Activated T-helper 2 cell treated with anti-CD3 and anti-CD28 coated beads, Interferon-gamma antibody, Interleukin-2, Interleukin-4, amounts not matched to agents 10 μg/mL and 5 μg/mL and 100 μg/mL, durations not matched to agents 14 hours and 24 hours and 36 hours (primary cell): ENCODE measurements at regions of chr3 and their contacts with region 1.

Region 1: GRCh38 chr3:50611464-50612233 is at the start of gene CISH:
- DNase-seq: peak; percentile 99
- H3K4me3 Mint-ChIP-seq: peak within 1 kb of the TSS; percentile 95
- H3K27ac Mint-ChIP-seq: peak within 1 kb of the TSS; percentile 100
- H3K4me1 Mint-ChIP-seq: peaks cover 29% of the 10 kb centered on the region
- H3K27me3 Mint-ChIP-seq: no peaks in the 10 kb centered on the region
- total RNA-seq, gene CISH: 351 and 355 TPM in 2 replicates

Region 2: GRCh38 chr3:50436114-50436674 is 175.5 kb before region 1 on chr3:
- intact Hi-C with region 1: loop called (anchors 2 kb)
- DNase-seq: peak; percentile 68
- H3K4me3 Mint-ChIP-seq: no peak overlapping the region
- H3K27ac Mint-ChIP-seq: no peak overlapping the region
- H3K4me1 Mint-ChIP-seq: no peaks in the 10 kb centered on the region
- H3K27me3 Mint-ChIP-seq: no peaks in the 10 kb centered on the region

Region 3: DNA sequence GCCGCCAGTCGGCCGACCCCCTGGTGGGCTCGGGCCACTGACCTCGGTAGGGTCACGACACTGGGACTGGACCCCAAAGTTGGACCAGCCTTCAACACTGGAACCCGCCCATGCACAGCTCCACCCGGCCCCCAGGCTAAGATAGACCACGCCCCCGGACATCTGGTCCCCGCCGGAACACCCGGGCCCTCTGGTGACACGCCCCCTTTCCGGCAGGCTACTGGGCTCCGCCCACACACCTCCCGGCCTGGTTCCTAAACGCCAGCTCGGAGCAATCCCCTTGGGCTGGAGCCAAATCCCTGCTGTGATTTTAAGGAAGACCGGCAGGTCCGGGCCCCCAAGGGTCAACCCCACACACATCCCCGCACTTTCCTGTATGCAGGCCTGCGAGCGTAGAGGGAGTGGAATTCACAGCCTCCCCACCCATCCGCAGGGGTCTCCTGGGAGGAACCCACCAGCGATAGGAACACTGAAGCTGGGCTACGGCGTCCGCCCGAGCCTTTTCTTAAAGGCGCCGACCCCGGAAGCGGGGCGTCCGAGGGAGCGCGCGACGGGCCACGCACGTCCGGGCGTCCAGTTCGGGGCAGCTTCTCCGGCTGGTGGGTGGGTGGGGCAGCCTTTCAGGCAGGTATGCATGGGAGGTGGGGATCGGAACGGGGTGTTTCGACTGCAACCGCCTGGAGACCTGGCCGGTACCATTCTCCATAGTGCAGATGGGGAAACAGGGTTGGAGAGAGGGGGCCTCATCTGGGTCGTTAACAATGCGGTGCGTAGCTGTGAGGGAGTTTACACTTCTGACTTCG is 42.5 kb before region 1 on chr3 and contains the start of gene HEMK1:
- intact Hi-C with region 1: loop called (anchors 1 kb)
- DNase-seq: peak; percentile 93
- H3K4me3 Mint-ChIP-seq: peak within 1 kb of the TSS; percentile 95
- H3K27ac Mint-ChIP-seq: peak within 1 kb of the TSS; percentile 96
- H3K4me1 Mint-ChIP-seq: peaks cover 66% of the 10 kb centered on the region
- H3K27me3 Mint-ChIP-seq: no peaks in the 10 kb centered on the region
- total RNA-seq, gene HEMK1: 61.7 and 68.7 TPM in 2 replicates

Region 4: GRCh38 chr3:50600841-50601591 is 10.6 kb before region 1 on chr3:
- intact Hi-C with region 1: loop called (anchors 1 kb)
- DNase-seq: peak; percentile 80
- H3K4me3 Mint-ChIP-seq: peak overlapping the region; percentile 74
- H3K27ac Mint-ChIP-seq: peak overlapping the region; percentile 100
- H3K4me1 Mint-ChIP-seq: peaks cover 81% of the 10 kb centered on the region
- H3K27me3 Mint-ChIP-seq: no peaks in the 10 kb centered on the region

Region 5: DNA sequence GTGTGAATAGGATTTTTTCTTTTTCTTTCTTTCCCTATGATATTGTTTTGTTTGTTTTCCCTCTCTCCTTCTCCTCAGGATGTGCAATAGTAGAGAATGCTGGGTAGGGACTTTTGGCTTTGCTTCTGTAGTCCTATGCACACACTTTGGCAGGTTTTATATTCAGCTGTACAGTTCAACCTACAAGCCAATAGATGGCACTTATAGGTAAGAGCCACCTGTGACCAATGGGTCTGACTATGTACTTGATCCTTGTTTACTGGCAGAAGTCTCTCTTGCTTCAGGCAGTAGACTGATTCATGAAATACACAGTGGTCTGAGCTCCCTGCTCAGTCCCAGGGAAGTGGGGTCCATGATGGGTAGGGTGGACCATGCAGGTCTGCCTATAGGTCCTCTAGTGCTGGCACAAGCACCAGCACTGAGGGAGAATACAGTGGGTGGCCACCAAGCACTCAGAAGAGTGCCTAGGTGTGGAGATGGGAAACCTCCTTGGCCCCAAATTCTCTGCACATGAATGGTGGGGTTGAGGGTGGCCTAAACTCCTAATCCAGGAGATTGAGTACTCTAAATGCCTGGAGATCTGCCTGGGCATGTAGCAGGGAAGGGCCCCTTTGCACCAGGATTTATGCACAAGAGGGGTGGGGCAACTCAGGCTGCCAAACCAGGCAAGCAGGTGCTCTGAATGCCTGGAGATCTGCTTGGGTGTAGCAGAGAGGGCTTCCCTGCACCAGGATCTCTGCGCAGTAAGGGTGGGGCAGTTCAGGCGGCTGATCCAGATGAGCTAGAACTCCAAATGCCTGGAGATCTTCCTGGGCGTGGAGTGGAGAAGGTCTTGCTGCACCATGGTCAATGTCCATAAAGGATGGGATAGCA is 239.2 kb after region 1 on chr3:
- intact Hi-C with region 1: no loop called
- DNase-seq: no peak
- H3K4me3 Mint-ChIP-seq: no peak overlapping the region
- H3K27ac Mint-ChIP-seq: no peak overlapping the region
- H3K4me1 Mint-ChIP-seq: no peaks in the 10 kb centered on the region
- H3K27me3 Mint-ChIP-seq: no peaks in the 10 kb centered on the region

Region 6: GRCh38 chr3:50971487-50971924 is 359.9 kb after region 1 on chr3:
- intact Hi-C with region 1: loop called (anchors 1 kb)
- DNase-seq: peak; percentile 49
- H3K4me3 Mint-ChIP-seq: no peak overlapping the region
- H3K27ac Mint-ChIP-seq: no peak overlapping the region
- H3K4me1 Mint-ChIP-seq: peaks cover 16% of the 10 kb centered on the region
- H3K27me3 Mint-ChIP-seq: no peaks in the 10 kb centered on the region

Region 7: DNA sequence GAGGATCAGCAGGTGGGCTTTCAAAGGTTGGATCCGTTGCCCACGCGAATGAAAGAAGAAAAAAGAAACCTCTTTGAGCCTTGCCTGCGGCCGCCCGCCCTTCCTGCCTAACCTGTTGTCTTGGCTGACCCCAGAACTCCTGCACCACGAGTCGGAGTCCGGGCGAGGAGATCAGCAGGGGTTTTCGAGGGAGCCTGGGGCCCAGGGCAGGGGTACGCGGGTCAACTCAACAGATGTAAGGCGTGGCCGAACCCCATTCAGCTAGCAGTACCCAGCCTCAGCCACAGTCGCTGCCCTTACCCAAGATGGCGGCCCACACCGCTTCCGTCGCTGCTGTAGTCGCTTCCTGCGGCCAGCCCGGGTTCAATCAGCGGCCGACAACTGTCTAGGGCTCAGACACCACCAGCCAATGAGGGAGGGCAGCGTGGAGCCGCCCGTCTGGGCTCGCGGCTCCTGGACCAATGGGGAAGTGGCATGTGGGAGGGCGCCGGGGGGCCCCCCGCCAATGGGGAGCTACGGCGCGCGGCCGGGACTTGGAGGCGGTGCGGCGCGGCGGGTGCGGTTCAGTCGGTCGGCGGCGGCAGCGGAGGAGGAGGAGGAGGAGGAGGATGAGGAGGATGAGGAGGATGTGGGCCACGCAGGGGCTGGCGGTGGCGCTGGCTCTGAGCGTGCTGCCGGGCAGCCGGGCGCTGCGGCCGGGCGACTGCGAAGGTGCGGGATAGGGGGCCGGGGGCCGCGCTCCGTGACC is 773.3 kb after region 1 on chr3 and contains the start of gene MANF:
- intact Hi-C with region 1: loop called (anchors 2 kb)
- DNase-seq: peak; percentile 97
- H3K4me3 Mint-ChIP-seq: peak within 1 kb of the TSS; percentile 96
- H3K27ac Mint-ChIP-seq: peak within 1 kb of the TSS; percentile 97
- H3K4me1 Mint-ChIP-seq: peaks cover 41% of the 10 kb centered on the region
- H3K27me3 Mint-ChIP-seq: no peaks in the 10 kb centered on the region
- total RNA-seq, gene MANF: 235 and 238 TPM in 2 replicates

Region 8: DNA sequence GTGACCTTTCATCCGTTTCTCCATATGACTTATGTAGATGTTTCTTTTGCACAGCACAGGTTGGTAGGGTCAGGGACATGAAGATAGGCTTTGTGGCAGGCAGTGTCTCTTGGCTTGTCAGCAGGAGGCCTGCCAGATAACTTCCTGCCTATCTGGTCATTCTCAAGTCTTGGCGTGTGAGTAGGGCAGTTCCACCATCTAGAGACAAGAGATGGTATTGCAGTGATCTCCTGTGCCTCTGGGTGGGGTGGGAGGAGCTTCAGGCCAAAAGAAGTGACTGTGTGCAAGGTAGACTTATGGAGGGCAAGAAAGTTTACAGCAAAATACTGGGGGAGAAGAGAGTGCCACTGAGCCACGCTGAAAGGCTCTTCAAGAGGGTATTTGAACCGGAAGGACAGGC is 1070.4 kb after region 1 on chr3:
- intact Hi-C with region 1: loop called (anchors 10 kb)
- DNase-seq: peak; percentile 78
- H3K4me3 Mint-ChIP-seq: peak overlapping the region; percentile 70
- H3K27ac Mint-ChIP-seq: peak overlapping the region; percentile 68
- H3K4me1 Mint-ChIP-seq: peaks cover 73% of the 10 kb centered on the region
- H3K27me3 Mint-ChIP-seq: no peaks in the 10 kb centered on the region